ENCODE measurements at regions of chr11 and their contacts with region 1.

Region 1: DNA sequence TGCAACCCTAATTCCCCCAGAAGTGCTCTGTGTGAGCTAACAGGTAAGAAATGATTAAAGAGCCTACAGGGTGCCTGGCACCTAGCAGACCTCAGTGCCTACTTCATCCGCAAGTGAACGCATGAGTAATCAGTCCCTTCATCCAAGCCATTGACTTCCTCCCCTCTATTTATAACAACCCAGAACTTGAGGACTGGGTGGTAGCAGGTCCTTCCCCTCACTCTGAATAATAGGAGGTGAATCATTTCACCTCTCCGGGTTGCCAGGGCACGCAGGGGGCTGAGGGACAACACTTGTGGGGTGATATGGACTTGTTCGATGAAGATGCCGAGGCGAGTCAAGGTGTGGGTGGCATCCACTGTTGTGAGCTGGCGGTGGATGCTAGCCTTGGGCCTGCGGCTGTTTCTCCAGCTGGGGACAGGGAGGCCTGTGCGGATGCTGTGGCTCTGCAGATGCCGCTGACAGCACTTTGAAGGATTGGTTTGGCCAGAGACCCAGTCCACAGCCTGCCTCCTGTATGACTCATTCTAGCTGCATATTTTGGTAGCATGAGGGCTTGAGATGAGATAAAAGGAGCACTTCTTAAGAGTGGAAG is 11.7 kb upstream of the SORL1-AS1 start:
- DNase-seq: no peak
- ATAC-seq: peak; percentile 64
- H3K4me3 ChIP-seq: peak overlapping the region; percentile 57; the same call in 1 of the 2 replicates
- H3K27ac ChIP-seq: peak overlapping the region; percentile 83
- H3K4me1 ChIP-seq: peaks cover 91% of the 10 kb centered on the region
- H3K27me3 ChIP-seq: no peaks in the 10 kb centered on the region
- CTCF ChIP-seq: no peak
- EP300 ChIP-seq: no peak; a peak in 1 of 4 replicates
- POLR2A ChIP-seq: peak; percentile 72
- RAD21 ChIP-seq: no peak

Region 2: DNA sequence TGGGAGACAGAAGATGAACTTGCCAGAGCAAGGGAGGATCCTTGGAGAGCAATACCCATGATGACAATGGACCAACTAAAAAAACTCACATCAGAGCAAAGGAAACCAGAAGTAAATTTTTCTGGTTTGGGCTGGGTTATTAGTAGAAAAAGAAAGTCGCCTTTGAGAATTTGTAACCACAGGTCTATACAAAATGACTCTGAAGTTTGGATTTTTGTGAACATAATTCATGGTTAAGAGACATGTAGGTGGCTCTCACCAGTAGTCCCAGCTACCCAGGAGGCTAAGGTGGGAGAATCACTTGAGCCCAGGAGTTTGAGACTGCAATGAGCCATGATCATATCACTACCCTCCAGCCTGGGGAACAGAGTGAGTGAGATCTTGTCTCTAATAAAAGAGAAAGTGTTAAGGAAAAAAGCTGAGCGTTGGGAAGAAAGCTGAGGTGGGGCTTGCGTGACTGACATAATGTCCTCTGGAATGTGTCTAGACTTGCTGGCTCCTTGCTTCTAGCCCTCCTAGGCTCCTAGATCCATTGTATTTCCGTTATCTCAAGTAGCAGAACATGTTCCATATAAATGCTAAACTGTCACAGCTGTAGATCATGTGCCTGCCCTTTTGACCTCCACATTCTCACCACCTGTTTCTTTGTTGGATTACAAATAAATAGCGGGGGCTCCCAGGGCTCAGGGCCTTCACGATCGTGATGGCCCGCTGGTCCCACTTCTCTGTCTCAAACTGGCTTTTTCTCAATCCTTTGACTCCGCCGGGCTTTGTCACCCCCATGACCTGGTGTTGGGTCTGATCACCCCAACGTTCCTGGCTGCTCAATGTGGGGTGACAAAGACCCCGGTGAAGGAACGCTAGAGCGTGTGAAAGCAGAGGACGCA is 228.1 kb before region 1 on chr11:
- CTCF ChIA-PET with region 1: no interaction called
- POLR2A ChIA-PET with region 1: no interaction called
- RAD21 ChIA-PET with region 1: no interaction called
- SMC1A ChIA-PET with region 1: no interaction called
- in situ Hi-C with region 1: no loop called
- intact Hi-C with region 1: loop called (anchors 5 kb)
- DNase-seq: peak; percentile 74
- ATAC-seq: peak; percentile 85
- H3K4me3 ChIP-seq: peak overlapping the region; percentile 57
- H3K27ac ChIP-seq: peak overlapping the region; percentile 95
- H3K4me1 ChIP-seq: peaks cover 32% of the 10 kb centered on the region
- H3K27me3 ChIP-seq: no peaks in the 10 kb centered on the region
- CTCF ChIP-seq: no peak
- EP300 ChIP-seq: no peak; a peak in 1 of 4 replicates
- POLR2A ChIP-seq: no peak
- RAD21 ChIP-seq: no peak

Region 3: DNA sequence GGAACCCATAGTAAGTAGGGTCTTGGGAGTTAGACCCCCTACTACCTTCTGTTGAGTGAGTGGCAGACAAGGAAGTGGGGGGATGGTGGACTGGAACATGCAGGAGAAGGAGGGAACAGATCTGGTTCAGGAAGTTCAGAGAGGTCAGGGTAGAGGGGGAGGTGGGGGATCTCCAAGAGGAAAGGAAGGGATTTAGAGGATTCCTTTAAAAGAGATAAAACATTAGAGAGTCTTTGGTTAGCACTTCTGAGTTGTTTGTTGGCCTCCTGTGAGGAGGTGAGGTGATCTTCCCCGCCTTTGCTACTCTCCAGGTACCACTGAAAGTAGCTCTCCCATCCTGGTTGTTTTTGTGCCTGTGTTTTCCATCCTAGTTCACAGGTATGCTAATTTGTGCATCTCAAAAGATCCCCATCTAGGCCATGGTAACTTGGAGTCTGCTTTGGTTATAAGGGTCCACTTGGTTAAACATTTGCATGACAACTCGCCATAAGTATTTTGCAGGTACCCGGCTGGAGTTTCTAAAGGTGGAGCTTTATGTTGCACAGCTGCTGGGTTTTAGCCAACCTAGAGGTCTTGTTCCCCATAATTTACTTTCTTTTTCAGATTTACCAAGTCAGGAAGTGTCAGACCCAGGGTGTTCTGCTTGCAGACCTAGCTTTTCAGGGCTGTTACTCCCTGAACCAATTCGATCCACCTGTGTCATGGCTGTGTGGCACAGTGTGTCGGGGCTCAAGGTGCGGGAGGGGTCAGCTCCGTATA is 91.6 kb before region 1 on chr11:
- CTCF ChIA-PET with region 1: interaction called, 4 read pairs
- POLR2A ChIA-PET with region 1: interaction called, 8 read pairs
- RAD21 ChIA-PET with region 1: interaction called, 42 read pairs
- SMC1A ChIA-PET with region 1: interaction called, 45 read pairs
- in situ Hi-C with region 1: no loop called
- intact Hi-C with region 1: no loop called
- DNase-seq: peak; percentile 82
- ATAC-seq: peak; percentile 89
- H3K4me3 ChIP-seq: peak overlapping the region; percentile 46; the same call in 1 of the 2 replicates
- H3K27ac ChIP-seq: peak overlapping the region; percentile 80
- H3K4me1 ChIP-seq: peaks cover 53% of the 10 kb centered on the region
- H3K27me3 ChIP-seq: no peaks in the 10 kb centered on the region
- CTCF ChIP-seq: no peak
- EP300 ChIP-seq: no peak
- POLR2A ChIP-seq: peak; percentile 69
- RAD21 ChIP-seq: 0 out of 2 replicates have a peak, but pooled peaks have one; percentile 4

Region 4: DNA sequence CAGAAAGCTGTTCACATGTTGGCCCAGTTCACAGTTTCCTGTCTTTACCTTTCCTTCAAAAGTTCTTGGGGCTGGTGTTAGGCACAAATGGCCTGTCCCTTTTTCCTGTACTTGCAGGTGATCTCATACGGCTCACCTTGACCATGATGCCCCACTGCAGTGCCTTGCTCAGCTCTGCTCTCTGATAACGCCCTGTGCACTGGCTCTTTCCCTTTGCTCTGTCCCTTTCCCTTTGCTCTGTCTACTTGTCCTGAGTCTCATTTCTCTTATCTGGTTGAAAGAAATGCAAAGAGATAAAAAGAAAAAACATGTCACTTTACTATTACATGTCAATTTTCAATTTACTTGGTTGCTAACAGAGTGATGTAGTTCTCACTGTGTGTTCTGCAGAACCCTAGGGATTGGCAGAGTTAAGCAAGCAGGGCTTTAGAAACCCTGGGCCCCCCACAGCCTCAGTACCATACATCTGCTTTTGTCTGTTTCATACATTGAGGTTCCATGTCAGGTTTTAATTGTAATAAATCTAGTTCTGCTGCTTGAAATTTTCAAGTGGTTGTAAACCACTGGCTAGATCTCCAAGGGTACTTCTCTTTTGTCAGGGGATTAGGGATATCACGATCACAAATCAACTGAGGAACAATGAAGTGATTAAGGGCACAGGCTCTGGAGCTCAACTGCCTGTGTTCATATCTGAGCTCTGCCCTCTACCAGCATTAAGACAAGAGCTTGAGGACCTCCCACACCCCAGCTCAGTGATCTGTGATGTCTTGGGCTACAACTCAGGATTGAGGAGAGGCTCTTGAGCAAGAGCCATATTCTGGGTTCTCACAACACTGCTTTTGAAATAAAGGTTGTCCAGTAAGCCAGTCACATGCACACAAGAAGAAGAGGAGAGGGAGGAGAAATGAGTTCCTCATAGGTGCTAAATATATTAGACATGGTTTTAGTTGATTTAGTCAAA is 28.6 kb before region 1 on chr11:
- CTCF ChIA-PET with region 1: no interaction called
- POLR2A ChIA-PET with region 1: interaction called, 4 read pairs
- RAD21 ChIA-PET with region 1: interaction called, 232 read pairs
- SMC1A ChIA-PET with region 1: interaction called, 266 read pairs
- in situ Hi-C with region 1: no loop called
- intact Hi-C with region 1: no loop called
- DNase-seq: no peak
- ATAC-seq: no peak
- H3K4me3 ChIP-seq: no peak overlapping the region
- H3K27ac ChIP-seq: no peak overlapping the region
- H3K4me1 ChIP-seq: peaks cover 12% of the 10 kb centered on the region
- H3K27me3 ChIP-seq: no peaks in the 10 kb centered on the region
- CTCF ChIP-seq: no peak
- EP300 ChIP-seq: no peak
- POLR2A ChIP-seq: no peak
- RAD21 ChIP-seq: no peak

Region 5: GRCh38 chr11:121482231-121483129 is 18.0 kb after region 1 on chr11:
- CTCF ChIA-PET with region 1: interaction called, 5 read pairs
- POLR2A ChIA-PET with region 1: interaction called, 13 read pairs
- RAD21 ChIA-PET with region 1: interaction called, 12 read pairs
- SMC1A ChIA-PET with region 1: interaction called, 13 read pairs
- in situ Hi-C with region 1: no loop called
- intact Hi-C with region 1: no loop called
- DNase-seq: peak; percentile 93
- ATAC-seq: peak; percentile 93
- H3K4me3 ChIP-seq: peak overlapping the region; percentile 36
- H3K27ac ChIP-seq: peak overlapping the region; percentile 77
- H3K4me1 ChIP-seq: peaks cover 37% of the 10 kb centered on the region
- H3K27me3 ChIP-seq: no peaks in the 10 kb centered on the region
- CTCF ChIP-seq: no peak
- EP300 ChIP-seq: peak in 1 of 2 experiments; percentile 40; a peak in 1 of 4 replicates
- POLR2A ChIP-seq: no peak
- RAD21 ChIP-seq: no peak

Region 6: GRCh38 chr11:121534131-121535093 is 70.0 kb after region 1 on chr11:
- CTCF ChIA-PET with region 1: no interaction called
- POLR2A ChIA-PET with region 1: no interaction called
- RAD21 ChIA-PET with region 1: interaction called, 3 read pairs
- SMC1A ChIA-PET with region 1: interaction called, 3 read pairs
- in situ Hi-C with region 1: no loop called
- intact Hi-C with region 1: loop called (anchors 5 kb)
- DNase-seq: no peak
- ATAC-seq: no peak
- H3K4me3 ChIP-seq: no peak overlapping the region
- H3K27ac ChIP-seq: no peak overlapping the region
- H3K4me1 ChIP-seq: peaks cover 45% of the 10 kb centered on the region
- H3K27me3 ChIP-seq: no peaks in the 10 kb centered on the region
- CTCF ChIP-seq: no peak
- EP300 ChIP-seq: no peak
- POLR2A ChIP-seq: no peak
- RAD21 ChIP-seq: no peak